Activated CD4-positive, alpha-beta T cell treated with anti-CD3 and anti-CD28 coated beads for 36 hours (primary cell): ENCODE measurements at regions of chr9 and their contacts with region 1.

Region 1: DNA sequence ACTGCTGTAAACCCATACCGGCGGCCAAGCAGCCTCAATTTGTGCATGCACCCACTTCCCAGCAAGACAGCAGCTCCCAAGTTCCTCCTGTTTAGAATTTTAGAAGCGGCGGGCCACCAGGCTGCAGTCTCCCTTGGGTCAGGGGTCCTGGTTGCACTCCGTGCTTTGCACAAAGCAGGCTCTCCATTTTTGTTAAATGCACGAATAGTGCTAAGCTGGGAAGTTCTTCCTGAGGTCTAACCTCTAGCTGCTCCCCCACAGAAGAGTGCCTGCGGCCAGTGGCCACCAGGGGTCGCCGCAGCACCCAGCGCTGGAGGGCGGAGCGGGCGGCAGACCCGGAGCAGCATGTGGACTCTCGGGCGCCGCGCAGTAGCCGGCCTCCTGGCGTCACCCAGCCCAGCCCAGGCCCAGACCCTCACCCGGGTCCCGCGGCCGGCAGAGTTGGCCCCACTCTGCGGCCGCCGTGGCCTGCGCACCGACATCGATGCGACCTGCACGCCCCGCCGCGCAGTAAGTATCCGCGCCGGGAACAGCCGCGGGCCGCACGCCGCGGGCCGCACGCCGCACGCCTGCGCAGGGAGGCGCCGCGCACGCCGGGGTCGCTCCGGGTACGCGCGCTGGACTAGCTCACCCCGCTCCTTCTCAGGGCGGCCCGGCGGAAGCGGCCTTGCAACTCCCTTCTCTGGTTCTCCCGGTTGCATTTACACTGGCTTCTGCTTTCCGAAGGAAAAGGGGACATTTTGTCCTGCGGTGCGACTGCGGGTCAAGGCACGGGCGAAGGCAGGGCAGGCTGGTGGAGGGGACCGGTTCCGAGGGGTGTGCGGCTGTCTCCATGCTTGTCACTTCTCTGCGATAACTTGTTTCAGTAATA is at the start of gene FXN:
- DNase-seq: peak; percentile 91
- ATAC-seq: peak; percentile 94
- H3K4me3 Mint-ChIP-seq: peak within 1 kb of the TSS; percentile 89
- H3K27ac Mint-ChIP-seq: peak within 1 kb of the TSS; percentile 91
- H3K4me1 Mint-ChIP-seq: peaks cover 20% of the 10 kb centered on the region
- H3K27me3 Mint-ChIP-seq: no peaks in the 10 kb centered on the region
- total RNA-seq, gene FXN: 23.2 to 24.2 TPM

Region 2: DNA sequence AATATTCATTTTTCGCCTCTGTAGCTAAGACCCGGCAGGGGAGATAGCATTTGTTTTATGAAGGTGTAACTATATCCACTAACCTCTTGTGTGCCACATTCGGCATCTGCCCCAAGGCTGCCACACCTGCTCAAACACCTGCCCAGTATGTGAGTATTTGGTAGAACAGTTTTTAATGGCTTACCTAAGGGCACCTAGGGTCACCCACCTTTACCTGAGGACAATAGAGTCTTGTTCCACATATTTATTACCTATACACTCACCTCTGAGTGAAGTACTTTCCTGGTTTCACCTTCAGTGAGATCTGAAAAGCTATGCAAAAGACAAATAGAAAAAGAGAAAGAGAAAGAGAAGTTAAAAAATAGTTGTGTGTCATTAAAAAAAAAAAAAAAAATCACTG is 398.7 kb before region 1 on chr9:
- CTCF ChIA-PET with region 1: no interaction called
- POLR2A ChIA-PET with region 1: no interaction called
- intact Hi-C with region 1: no loop called
- DNase-seq: no peak
- ATAC-seq: no peak
- H3K4me3 Mint-ChIP-seq: no peak overlapping the region
- H3K27ac Mint-ChIP-seq: no peak overlapping the region
- H3K4me1 Mint-ChIP-seq: peaks cover 8% of the 10 kb centered on the region
- H3K27me3 Mint-ChIP-seq: peaks cover 7% of the 10 kb centered on the region

Region 3: DNA sequence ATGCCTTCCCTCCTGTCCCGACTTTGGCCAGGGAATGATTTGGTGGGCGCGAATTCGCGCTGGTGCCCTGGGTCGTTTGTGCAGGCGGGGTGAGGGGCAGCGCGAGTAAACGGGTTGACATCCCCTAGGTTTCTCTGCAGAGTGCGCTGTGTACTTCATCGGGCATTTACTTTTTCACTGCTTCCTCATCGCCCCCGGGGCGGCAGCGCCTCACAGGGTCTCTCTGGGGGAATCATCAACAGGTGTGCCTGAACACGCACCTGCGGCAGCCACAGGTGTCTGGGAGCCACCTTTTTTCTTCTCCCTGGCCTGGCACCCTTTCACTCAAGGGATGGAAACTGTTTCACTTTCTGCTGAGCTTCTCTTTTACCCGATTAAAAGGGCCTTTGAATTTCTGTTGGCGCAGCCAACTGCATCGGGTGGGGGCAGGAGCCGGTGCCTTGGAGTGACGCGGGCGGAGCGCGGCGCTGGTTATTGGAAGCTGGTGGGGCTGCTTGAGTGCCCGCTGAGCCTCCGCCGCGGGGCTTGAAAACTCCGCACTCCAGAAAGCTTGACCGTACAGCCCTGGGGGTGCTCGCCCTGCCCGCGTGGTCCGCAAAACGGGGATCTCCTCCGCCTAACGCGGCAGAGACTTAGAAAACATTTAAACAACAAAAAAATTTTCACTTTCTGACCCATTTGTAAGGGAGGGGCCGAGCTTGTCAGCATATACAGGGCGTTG is 86.3 kb after region 1 on chr9:
- CTCF ChIA-PET with region 1: no interaction called
- POLR2A ChIA-PET with region 1: no interaction called
- intact Hi-C with region 1: loop called in 1 of 2 experiments (anchors 5 kb)
- DNase-seq: peak; percentile 68
- ATAC-seq: peak; percentile 75
- H3K4me3 Mint-ChIP-seq: peak overlapping the region; percentile 77
- H3K27ac Mint-ChIP-seq: peak overlapping the region; percentile 52
- H3K4me1 Mint-ChIP-seq: peaks cover 16% of the 10 kb centered on the region
- H3K27me3 Mint-ChIP-seq: peaks cover 2% of the 10 kb centered on the region

Region 4: DNA sequence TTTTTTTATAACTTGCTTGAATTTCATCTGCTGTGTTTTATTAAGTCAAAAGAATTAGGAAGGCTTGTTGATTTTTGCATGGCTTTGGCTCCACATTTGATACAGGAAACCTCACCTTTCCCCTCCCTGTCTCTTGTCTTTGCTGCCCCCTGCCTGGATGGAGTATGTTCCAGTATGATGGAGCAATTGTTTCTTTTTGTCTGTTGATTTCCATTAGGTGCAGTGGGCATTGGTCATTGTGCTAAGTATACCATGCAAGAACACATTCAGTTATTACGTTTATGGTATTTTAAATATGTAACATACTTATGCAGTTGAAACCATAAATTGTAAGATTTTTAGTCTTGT is 158.0 kb after region 1 on chr9:
- CTCF ChIA-PET with region 1: interaction called, 8 read pairs
- POLR2A ChIA-PET with region 1: no interaction called
- intact Hi-C with region 1: loop called (anchors 1 kb)
- DNase-seq: no peak
- ATAC-seq: no peak
- H3K4me3 Mint-ChIP-seq: no peak overlapping the region
- H3K27ac Mint-ChIP-seq: no peak overlapping the region
- H3K4me1 Mint-ChIP-seq: peaks cover 8% of the 10 kb centered on the region
- H3K27me3 Mint-ChIP-seq: no peaks in the 10 kb centered on the region

Region 5: DNA sequence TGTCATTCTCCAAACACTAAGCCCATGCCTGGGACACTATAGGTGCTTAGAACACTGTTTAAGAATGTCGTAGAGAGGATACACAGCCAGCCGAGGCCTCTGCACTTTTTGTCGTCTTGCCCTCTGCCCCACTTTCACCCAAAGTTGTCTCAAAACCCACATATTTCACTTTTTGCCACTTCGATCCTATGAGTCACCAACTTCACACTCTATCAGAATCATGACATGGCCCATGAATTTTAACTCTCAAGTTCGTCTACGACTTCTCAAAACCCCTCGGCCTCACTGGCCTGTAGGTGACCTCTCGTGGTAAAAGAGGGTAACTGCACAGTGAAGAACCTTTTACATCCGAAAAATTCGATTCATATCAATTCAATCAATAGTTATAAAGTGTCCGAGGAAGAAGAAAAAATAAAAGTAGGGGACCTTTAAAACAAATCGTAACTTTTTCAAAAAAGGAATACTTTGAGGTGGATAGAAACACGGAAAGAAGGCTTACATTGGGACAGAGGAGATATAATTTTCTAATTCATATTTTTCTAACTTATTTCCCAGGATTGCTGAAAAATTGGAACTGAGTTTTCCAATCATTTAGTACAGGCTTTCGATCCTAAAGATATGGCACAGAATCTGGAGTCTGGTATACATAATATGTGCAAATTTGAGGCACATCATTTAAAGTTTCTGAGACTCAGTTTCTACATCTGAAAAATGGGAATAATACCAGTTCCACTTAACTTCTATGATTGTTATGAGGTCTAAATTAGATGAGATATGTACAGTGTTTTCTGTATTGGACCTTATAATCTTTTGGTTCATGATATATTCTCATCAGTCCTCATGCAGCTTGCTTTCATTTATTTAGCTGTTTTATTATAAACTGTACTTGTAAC is 513.9 kb after region 1 on chr9:
- CTCF ChIA-PET with region 1: no interaction called
- POLR2A ChIA-PET with region 1: no interaction called
- intact Hi-C with region 1: loop called (anchors 1 to 5 kb)
- DNase-seq: peak; percentile 52
- ATAC-seq: peak; percentile 80
- H3K4me3 Mint-ChIP-seq: no peak overlapping the region
- H3K27ac Mint-ChIP-seq: no peak overlapping the region
- H3K4me1 Mint-ChIP-seq: peaks cover 5% of the 10 kb centered on the region
- H3K27me3 Mint-ChIP-seq: peaks cover 13% of the 10 kb centered on the region

Region 6: GRCh38 chr9:69759421-69760277 is 724.0 kb after region 1 on chr9 and contains the start of gene PTAR1:
- CTCF ChIA-PET with region 1: no interaction called
- POLR2A ChIA-PET with region 1: no interaction called
- intact Hi-C with region 1: loop called in 1 of 2 experiments (anchors 10 kb)
- DNase-seq: peak; percentile 95
- ATAC-seq: peak; percentile 87
- H3K4me3 Mint-ChIP-seq: peak within 1 kb of the TSS; percentile 94
- H3K27ac Mint-ChIP-seq: peak within 1 kb of the TSS; percentile 94
- H3K4me1 Mint-ChIP-seq: peaks cover 27% of the 10 kb centered on the region
- H3K27me3 Mint-ChIP-seq: no peaks in the 10 kb centered on the region
- total RNA-seq, gene PTAR1: 35.2 to 37.1 TPM